IMR-90 (cell line): ENCODE measurements at regions of chr10 and their contacts with region 1.

Region 1: GRCh38 chr10:91632671-91633550 is at the start of gene PPP1R3C:
- DNase-seq: peak; percentile 92
- ATAC-seq: peak; percentile 94
- H3K4me3 ChIP-seq: peak within 1 kb of the TSS; percentile 77
- H3K27ac ChIP-seq: peak within 1 kb of the TSS; percentile 67
- H3K4me1 ChIP-seq: peaks cover 6% of the 10 kb centered on the region
- H3K27me3 ChIP-seq: no peaks in the 10 kb centered on the region
- CTCF ChIP-seq: peak; percentile 43
- POLR2A ChIP-seq: peak; percentile 98
- RAD21 ChIP-seq: peak; percentile 57
- total RNA-seq, gene PPP1R3C: 61.7 and 62.9 TPM in 2 replicates

Region 2: DNA sequence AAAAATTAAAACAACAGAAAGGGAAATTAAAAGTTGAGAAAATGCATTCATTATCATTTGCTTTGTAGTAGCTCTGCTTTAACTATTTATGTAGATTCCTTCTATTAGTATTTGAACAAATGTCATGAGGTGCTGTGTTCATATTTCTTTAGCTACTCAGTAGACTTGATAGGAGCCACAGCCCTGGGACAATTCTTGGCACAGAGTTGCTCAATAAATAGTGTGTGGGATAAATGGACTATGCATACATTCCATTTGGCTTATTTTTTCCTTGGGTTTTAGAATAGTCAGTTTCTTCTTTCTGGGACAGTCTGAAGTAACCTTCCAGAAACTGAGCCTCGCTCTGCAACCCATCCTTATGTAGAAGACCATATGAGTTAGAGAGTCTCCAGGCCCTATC is 747.7 kb before region 1 on chr10:
- CTCF ChIA-PET with region 1: no interaction called
- POLR2A ChIA-PET with region 1: no interaction called
- dilution Hi-C with region 1: no loop called
- in situ Hi-C with region 1: no loop called
- intact Hi-C with region 1: loop called (anchors 10 kb)
- DNase-seq: peak; percentile 85
- ATAC-seq: peak; percentile 86
- H3K4me3 ChIP-seq: no peak overlapping the region
- H3K27ac ChIP-seq: peak overlapping the region; percentile 36
- H3K4me1 ChIP-seq: peaks cover 17% of the 10 kb centered on the region
- H3K27me3 ChIP-seq: no peaks in the 10 kb centered on the region
- CTCF ChIP-seq: no peak
- POLR2A ChIP-seq: no peak
- RAD21 ChIP-seq: no peak

Region 3: DNA sequence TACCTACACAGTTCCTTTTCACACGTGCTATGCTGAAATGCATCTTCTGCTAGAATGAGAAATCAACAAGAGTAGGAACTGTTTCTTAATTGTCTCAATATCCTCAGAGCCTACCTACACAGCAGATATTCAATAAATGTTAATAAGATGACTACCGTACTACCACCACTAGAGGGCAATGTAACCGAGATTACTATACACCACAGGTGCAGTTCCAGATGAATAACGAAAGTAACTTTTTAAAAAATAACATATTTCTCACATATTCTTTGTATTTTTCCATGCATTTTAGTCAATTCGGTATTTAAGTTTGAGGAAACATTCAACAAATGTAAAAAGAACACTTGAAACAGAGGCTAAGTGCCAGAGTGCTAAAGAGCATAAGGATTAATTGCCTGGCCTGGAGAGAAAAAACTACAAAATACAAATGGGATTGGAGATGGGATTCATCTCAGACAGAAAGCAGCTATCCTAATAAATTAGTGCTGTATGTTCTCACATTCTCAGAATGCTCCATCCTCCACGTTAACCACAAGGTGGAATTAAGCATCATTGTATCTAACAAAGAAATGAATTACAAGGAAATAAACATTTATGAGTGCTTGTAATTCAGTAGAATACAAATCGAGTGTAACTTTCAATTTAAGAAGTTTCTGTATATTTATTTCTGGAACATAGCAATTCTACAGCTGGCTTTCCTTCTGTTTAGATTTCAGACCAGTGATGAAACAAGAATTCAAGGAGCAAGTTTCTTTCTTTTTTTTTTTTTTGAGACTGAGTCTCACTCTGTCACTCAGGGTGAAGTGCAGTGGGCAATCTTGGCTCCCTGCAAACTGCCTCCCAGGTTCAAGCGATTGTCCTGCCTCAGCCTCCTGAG is 243.0 kb before region 1 on chr10:
- CTCF ChIA-PET with region 1: interaction called, 4 read pairs
- POLR2A ChIA-PET with region 1: no interaction called
- dilution Hi-C with region 1: no loop called
- in situ Hi-C with region 1: no loop called
- intact Hi-C with region 1: loop called (anchors 1 kb)
- DNase-seq: peak; percentile 71
- ATAC-seq: peak; percentile 79
- H3K4me3 ChIP-seq: peak overlapping the region; percentile 37; the same call in 1 of the 2 replicates
- H3K27ac ChIP-seq: peak overlapping the region; percentile 37; the same call in 1 of the 2 replicates
- H3K4me1 ChIP-seq: peaks cover 3% of the 10 kb centered on the region; the same call in 1 of the 2 replicates
- H3K27me3 ChIP-seq: peaks cover 21% of the 10 kb centered on the region
- CTCF ChIP-seq: peak; percentile 64
- POLR2A ChIP-seq: no peak
- RAD21 ChIP-seq: peak; percentile 65

Region 4: GRCh38 chr10:91493313-91493712 is 139.6 kb before region 1 on chr10:
- CTCF ChIA-PET with region 1: interaction called, 9 read pairs
- POLR2A ChIA-PET with region 1: interaction called, 3 read pairs
- dilution Hi-C with region 1: no loop called
- in situ Hi-C with region 1: loop called (anchors 5 kb)
- intact Hi-C with region 1: loop called (anchors 1 kb)
- DNase-seq: peak; percentile 63
- ATAC-seq: no peak
- H3K4me3 ChIP-seq: no peak overlapping the region
- H3K27ac ChIP-seq: no peak overlapping the region
- H3K4me1 ChIP-seq: peaks cover 3% of the 10 kb centered on the region; the same call in 1 of the 2 replicates
- H3K27me3 ChIP-seq: no peaks in the 10 kb centered on the region
- CTCF ChIP-seq: peak; percentile 57
- POLR2A ChIP-seq: no peak
- RAD21 ChIP-seq: peak; percentile 54

Region 5: DNA sequence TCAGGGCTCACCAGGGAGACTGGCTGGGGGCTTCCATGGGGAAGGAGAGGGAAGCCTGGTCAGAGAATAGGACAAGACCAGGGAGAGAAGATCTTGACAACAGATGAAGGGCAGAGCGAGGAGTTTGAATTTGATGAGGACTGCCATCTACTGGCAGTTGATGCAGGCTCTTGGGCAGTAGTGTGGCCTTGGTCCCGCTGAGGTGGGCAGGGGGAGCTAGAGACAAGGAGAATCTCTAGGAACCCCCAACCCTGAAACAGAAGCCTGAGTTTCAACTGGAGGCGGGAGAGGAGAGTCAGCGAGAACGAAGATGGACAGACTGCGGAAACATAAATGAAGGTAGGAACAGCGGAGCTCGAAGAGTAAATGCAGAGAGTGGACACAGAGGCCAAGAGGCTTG is 81.1 kb before region 1 on chr10:
- CTCF ChIA-PET with region 1: interaction called, 30 read pairs
- POLR2A ChIA-PET with region 1: interaction called, 3 read pairs
- dilution Hi-C with region 1: no loop called
- in situ Hi-C with region 1: no loop called
- intact Hi-C with region 1: loop called (anchors 1 kb)
- DNase-seq: peak; percentile 80
- ATAC-seq: peak; percentile 93
- H3K4me3 ChIP-seq: no peak overlapping the region
- H3K27ac ChIP-seq: no peak overlapping the region
- H3K4me1 ChIP-seq: no peaks in the 10 kb centered on the region
- H3K27me3 ChIP-seq: no peaks in the 10 kb centered on the region
- CTCF ChIP-seq: peak; percentile 98
- POLR2A ChIP-seq: no peak
- RAD21 ChIP-seq: peak; percentile 83

Region 6: GRCh38 chr10:91694170-91694794 is 61.4 kb after region 1 on chr10:
- CTCF ChIA-PET with region 1: interaction called, 15 read pairs
- POLR2A ChIA-PET with region 1: no interaction called
- dilution Hi-C with region 1: no loop called
- in situ Hi-C with region 1: no loop called
- intact Hi-C with region 1: loop called (anchors 1 kb)
- DNase-seq: peak; percentile 51
- ATAC-seq: peak; percentile 81
- H3K4me3 ChIP-seq: no peak overlapping the region
- H3K27ac ChIP-seq: no peak overlapping the region
- H3K4me1 ChIP-seq: peaks cover 8% of the 10 kb centered on the region
- H3K27me3 ChIP-seq: no peaks in the 10 kb centered on the region
- CTCF ChIP-seq: peak; percentile 82
- POLR2A ChIP-seq: no peak
- RAD21 ChIP-seq: peak; percentile 86

Region 7: GRCh38 chr10:91797874-91798648 is 165.2 kb after region 1 on chr10 and contains the start of gene TNKS2:
- CTCF ChIA-PET with region 1: no interaction called
- POLR2A ChIA-PET with region 1: no interaction called
- dilution Hi-C with region 1: no loop called
- in situ Hi-C with region 1: no loop called
- intact Hi-C with region 1: loop called (anchors 5 kb)
- DNase-seq: peak; percentile 91
- ATAC-seq: peak; percentile 94
- H3K4me3 ChIP-seq: peak within 1 kb of the TSS; percentile 92
- H3K27ac ChIP-seq: peak within 1 kb of the TSS; percentile 95
- H3K4me1 ChIP-seq: 0 out of 2 replicates have a peak, but pooled peaks cover 2% of the 10 kb centered on the region
- H3K27me3 ChIP-seq: no peaks in the 10 kb centered on the region
- CTCF ChIP-seq: no peak
- POLR2A ChIP-seq: peak; percentile 86
- RAD21 ChIP-seq: no peak
- total RNA-seq, gene TNKS2: 41.4 and 49.4 TPM in 2 replicates